AG04450 (cell line): ENCODE measurements at regions of chr22 and their contacts with region 1.

Region 1: DNA sequence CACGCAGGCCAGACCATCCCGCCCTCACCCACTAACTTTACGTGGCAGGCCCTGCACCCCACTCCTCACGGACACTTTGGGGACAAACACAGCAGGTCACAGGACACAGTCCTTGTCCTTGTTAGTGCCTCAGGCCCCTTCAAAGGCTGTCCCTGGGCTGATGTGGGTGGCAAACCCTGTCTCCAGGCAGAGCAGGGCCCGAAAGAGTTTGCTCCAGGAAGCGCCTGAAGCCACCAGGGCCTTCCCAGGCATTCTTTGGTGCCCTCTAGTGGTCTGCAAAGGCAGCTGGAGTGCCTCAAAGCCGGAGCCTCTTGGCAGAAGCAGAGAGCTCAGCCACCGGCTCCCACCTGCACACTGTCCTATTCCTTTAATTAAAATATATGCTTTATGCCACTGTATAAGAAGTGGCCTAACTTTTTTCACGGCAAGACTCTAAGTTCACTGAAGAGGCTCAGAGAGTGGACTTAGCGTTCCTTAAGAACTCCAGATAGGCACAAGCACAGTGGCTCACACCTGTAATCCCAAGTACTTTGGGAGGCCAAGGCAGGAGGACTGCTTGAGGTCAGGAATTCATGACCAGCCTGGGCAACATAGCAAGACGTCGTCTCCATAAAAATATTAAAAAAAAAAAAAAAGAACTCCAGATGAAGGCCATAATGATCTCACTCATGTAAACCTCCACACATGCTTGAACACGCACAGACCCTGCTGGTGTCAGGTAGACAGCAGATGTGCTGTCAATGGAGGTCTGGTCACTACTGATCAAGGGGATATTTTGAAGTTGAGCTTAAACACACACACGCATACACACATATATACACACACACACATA is 11.1 kb downstream of the TXN2 start:
- DNase-seq: peak; percentile 83
- H3K4me3 ChIP-seq: no peak overlapping the region
- H3K27ac ChIP-seq: peak overlapping the region; percentile 89
- H3K27me3 ChIP-seq: no peaks in the 10 kb centered on the region
- CTCF ChIP-seq: peak; percentile 98

Region 2: DNA sequence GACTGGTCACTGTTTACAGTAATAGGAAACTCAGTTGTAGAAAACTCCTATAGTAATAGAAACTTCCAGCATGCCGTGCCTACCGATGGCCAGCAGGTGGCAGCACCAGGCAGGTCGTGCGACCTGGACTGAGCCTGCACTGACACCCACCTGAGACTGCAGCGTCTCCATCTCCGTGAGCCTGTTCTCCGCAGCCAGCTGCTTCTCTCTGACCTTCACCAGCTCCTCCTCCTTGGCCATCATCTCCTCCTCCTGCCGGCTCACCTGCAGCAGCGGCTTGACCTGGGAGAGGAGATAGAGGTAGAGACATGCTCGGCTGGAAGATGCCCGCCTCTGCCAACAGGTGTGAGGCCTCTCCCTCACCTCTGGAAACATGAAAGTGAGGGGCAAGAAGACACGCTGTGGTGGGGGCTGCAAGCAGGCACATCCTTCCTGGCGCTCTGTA is 169.0 kb before region 1 on chr22:
- CTCF ChIA-PET with region 1: interaction called, 41 read pairs
- POLR2A ChIA-PET with region 1: interaction called, 7 read pairs
- DNase-seq: peak; percentile 33
- H3K4me3 ChIP-seq: peak overlapping the region; percentile 18
- H3K27ac ChIP-seq: peak overlapping the region; percentile 99
- H3K27me3 ChIP-seq: no peaks in the 10 kb centered on the region
- CTCF ChIP-seq: peak; percentile 91

Region 3: DNA sequence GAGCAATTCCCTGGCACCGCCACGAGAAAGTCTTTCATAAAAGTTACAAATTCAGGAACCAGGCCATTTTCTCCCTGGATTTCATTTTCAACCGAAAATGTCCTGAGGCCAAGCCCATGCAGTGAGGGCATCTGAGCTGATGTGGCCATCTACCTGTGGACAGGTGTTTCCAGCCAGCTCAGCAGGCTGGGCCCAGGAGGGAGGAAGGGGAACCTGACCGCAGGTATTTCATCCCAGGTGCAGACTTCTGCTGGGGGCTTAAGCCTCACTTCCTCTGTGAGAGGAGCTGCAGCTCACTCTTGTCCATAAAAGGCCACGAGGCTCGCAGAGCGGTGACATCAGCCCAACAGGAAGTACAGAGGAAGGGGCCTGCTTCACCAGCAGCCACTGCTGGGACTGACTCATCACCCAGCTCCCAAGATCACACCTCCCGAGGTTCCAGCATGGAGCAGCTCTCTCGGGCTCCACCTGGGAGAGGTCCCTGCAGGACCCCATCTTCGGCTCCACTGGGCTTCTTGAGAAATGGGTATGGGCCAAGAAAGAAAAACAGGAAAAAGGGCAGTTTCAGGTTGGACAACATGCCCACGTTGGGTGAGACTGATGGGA is 139.0 kb before region 1 on chr22:
- CTCF ChIA-PET with region 1: interaction called, 21 read pairs
- POLR2A ChIA-PET with region 1: interaction called, 6 read pairs
- DNase-seq: peak; percentile 89
- H3K4me3 ChIP-seq: no peak overlapping the region
- H3K27ac ChIP-seq: peak overlapping the region; percentile 100
- H3K27me3 ChIP-seq: no peaks in the 10 kb centered on the region
- CTCF ChIP-seq: no peak

Region 4: GRCh38 chr22:36365020-36365411 is 105.4 kb before region 1 on chr22:
- CTCF ChIA-PET with region 1: interaction called, 12 read pairs
- POLR2A ChIA-PET with region 1: interaction called, 8 read pairs
- DNase-seq: peak; percentile 74
- H3K4me3 ChIP-seq: no peak overlapping the region
- H3K27ac ChIP-seq: peak overlapping the region; percentile 87
- H3K27me3 ChIP-seq: no peaks in the 10 kb centered on the region
- CTCF ChIP-seq: no peak

Region 5: GRCh38 chr22:36481393-36482168 is 11.2 kb after region 1 on chr22 and contains the start of gene TXN2:
- CTCF ChIA-PET with region 1: interaction called, 5 read pairs
- POLR2A ChIA-PET with region 1: interaction called, 13 read pairs
- DNase-seq: peak; percentile 91
- H3K4me3 ChIP-seq: peak within 1 kb of the TSS; percentile 80
- H3K27ac ChIP-seq: peak within 1 kb of the TSS; percentile 96
- H3K27me3 ChIP-seq: no peaks in the 10 kb centered on the region
- CTCF ChIP-seq: no peak
- polyA plus RNA-seq, gene TXN2: 157 and 168 TPM in 2 replicates

Region 6: DNA sequence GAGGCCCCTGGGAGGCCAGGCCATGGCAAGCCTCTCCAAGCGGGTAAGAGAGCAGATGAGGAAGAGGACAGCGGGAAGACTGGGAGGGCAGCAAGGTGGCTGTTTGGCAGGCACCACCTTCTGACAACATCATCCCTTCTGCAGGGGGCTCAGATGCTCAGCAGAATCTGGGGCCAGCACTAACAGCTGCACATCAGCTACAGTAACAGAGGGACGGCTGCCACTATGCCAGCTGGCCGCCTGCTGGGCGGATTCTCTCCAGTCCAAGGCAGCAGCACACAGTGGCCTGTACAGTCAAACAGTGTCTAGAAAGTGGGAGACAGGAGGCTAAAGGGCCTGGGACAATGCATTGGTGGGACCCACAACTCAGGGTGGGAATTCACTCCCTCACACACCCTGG is 21.7 kb after region 1 on chr22:
- CTCF ChIA-PET with region 1: no interaction called
- POLR2A ChIA-PET with region 1: no interaction called
- DNase-seq: no peak
- H3K4me3 ChIP-seq: no peak overlapping the region
- H3K27ac ChIP-seq: no peak overlapping the region
- H3K27me3 ChIP-seq: no peaks in the 10 kb centered on the region
- CTCF ChIP-seq: no peak

Region 7: GRCh38 chr22:36595940-36596339 is 125.6 kb after region 1 on chr22:
- CTCF ChIA-PET with region 1: no interaction called
- POLR2A ChIA-PET with region 1: no interaction called
- DNase-seq: no peak
- H3K4me3 ChIP-seq: no peak overlapping the region
- H3K27ac ChIP-seq: no peak overlapping the region
- H3K27me3 ChIP-seq: peaks cover 33% of the 10 kb centered on the region
- CTCF ChIP-seq: no peak